ENCODE measurements at regions of chr17 and their contacts with region 1.

Region 1: GRCh38 chr17:15143524-15143923 is 121.6 kb downstream of the PMP22 start:
- DNase-seq: no peak
- ATAC-seq: no peak
- H3K4me3 ChIP-seq: no peak overlapping the region
- H3K27ac ChIP-seq: no peak overlapping the region
- H3K4me1 ChIP-seq: no peaks in the 10 kb centered on the region
- H3K27me3 ChIP-seq: no peaks in the 10 kb centered on the region; a peak in 1 of 5 replicates
- CTCF ChIP-seq: no peak
- EP300 ChIP-seq: no peak
- POLR2A ChIP-seq: no peak
- RAD21 ChIP-seq: no peak

Region 2: DNA sequence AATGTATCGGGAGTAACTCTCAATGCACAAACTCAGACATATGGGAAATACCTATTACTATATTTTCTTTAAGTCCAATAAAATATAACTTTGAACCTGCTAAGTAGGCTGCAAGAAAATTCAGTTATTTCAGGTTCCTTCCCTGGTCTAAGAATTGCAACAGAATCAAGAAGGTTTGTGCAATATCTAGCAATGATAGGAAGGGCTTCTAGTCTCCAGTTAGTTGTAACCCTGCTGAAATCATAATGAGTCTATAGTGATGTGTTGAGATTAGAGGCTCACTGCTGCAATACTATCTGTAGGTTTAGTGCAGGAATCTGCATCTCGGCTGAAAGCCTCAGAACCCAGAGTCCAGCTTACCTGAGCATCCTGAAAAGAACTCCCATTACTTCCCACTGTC is 11.1 kb after region 1 on chr17:
- CTCF ChIA-PET with region 1: no interaction called
- POLR2A ChIA-PET with region 1: no interaction called
- in situ Hi-C with region 1: no loop called
- intact Hi-C with region 1: loop called (anchors 1 kb)
- DNase-seq: no peak
- ATAC-seq: no peak
- H3K4me3 ChIP-seq: no peak overlapping the region
- H3K27ac ChIP-seq: no peak overlapping the region
- H3K4me1 ChIP-seq: no peaks in the 10 kb centered on the region
- H3K27me3 ChIP-seq: peaks cover 0 to 7% of the 10 kb centered on the region in 2 experiments; a peak in 1 of 5 replicates
- CTCF ChIP-seq: no peak
- EP300 ChIP-seq: no peak
- POLR2A ChIP-seq: no peak
- RAD21 ChIP-seq: no peak

Measured in HepG2 (cell line).